Vagina (tissue), 2 donors: ENCODE measurements at regions of chr2 and their contacts with region 1.

Region 1: DNA sequence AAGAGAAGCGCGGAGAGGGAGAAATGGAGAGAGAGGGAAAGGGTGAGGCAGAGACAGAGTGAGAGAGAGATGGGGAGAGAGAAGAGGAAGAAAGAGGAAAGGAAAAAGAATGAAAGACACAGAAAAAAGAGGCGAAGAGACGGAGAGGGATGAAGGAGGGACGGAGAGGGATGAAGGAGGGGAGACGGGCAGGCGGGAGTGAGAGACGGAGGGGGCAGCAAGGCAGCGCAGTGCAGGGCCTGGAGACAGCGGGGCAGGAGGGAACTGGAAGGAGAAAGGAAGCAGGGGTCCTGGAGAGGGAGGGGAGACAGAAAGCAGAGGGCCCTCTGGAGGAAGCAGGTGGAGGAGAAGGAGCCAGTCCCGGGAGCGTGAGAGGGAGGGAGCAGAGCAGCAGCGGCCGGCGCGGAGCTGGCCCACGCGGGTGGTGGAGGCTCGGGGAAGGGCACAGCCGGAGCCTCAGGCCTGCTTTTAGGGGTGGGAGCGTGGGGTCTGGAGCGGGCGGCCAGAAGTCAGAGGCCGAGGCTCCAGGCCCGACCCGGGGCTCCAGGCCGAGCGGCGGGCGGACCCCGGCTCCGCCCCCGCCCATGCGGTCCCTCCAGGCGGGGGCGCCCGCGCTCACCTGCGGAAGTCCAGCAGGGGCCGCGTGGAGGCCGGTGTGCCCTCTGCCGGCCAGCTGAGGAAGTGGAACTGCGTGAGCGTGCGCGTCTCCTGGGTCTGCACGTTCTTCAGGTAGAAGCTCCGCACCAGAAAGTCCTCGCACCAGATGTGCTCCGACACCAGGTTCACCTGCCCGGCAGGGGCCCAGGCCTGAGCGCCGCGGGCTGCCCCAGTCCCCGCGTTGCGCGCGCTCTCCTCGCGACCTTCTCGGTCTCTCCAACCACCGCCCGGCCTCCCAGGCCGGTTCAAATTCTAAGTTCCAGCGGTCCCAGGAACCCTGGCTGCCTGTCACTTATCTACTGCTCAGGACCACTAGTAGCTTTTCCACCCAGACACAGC is 14.5 kb downstream of the PTPRN start:
- DNase-seq: peak in 1 of 2 donors; percentile 83
- H3K4me3 ChIP-seq: peak overlapping the region; percentile 44 to 54
- H3K27ac ChIP-seq: peak overlapping the region; percentile 89
- H3K4me1 ChIP-seq: peaks cover 6% of the 10 kb centered on the region
- H3K27me3 ChIP-seq: no peaks in the 10 kb centered on the region
- CTCF ChIP-seq: peak; percentile 99
- POLR2A ChIP-seq: no peak

Region 2: DNA sequence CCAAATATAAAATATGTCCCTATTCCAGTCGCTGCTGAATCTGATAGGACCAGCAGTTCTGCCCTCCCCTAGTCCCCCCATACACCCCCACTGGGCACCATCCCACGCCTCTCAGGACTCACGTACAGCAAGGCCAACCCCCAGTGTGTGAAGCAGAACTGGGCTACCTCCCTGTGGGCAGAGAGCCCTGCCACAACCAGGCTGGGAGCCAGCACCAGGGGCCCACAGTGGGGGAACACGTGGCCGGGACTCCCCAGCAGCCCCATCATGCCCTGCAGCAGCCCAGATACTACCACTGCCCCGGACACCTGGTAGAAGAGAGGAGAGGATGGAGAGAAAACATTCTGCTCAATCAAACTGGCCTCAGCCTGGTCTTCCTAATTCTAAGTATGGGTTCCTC is 126.1 kb before region 1 on chr2:
- intact Hi-C with region 1: loop called (anchors 5 kb)
- DNase-seq: peak in 1 of 2 donors; percentile 76
- H3K4me3 ChIP-seq: no peak overlapping the region
- H3K27ac ChIP-seq: no peak overlapping the region
- H3K4me1 ChIP-seq: no peaks in the 10 kb centered on the region
- H3K27me3 ChIP-seq: no peaks in the 10 kb centered on the region
- CTCF ChIP-seq: no peak
- POLR2A ChIP-seq: no peak

Region 3: DNA sequence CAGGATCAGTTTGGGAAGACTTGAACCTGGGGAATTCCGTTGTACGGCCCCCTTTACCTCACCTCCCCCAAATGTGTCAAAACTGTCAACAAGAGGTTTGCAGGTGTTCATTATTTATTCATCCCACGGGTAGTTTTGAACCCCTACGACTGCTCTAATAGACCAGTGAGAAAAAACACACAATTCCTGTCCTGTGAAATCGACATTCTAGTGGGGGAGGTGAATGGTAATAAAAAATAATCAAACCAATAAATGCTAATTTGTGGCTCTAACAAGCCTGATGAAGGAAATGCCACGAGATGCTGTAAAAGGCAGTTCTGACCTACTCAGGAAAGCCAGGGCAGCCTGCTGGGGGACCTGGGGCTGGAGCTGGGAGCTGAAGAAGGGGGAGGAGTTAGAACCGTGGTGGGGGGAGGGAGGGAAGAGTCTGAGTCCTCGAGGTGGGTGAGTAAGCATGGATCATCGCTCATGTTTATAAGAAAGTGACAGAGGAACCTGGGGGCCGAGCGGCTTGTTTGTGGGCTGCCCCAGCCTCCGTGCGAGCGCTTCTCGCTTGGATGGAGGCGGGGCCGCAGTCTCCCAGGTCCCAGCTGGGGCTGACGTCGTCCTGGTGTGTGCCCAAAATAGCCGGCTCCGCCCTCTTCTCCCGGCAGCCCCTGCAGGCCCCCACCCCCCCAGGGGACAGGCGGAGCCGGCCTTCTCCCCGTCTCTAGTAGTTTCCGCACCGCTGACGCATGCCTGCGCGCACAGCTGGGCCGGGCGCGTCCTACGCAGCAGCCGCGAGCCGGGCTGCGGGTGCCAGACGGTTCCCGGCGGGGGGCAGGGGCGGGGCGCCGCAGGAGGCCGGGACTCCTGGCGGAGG is 15.8 kb before region 1 on chr2 and contains the start of gene DNAJB2:
- intact Hi-C with region 1: loop called (anchors 1 kb)
- DNase-seq: peak in 1 of 2 donors; percentile 99
- H3K4me3 ChIP-seq: peak within 1 kb of the TSS; percentile 67 to 84
- H3K27ac ChIP-seq: peak within 1 kb of the TSS; percentile 100
- H3K4me1 ChIP-seq: peaks cover 39% of the 10 kb centered on the region
- H3K27me3 ChIP-seq: no peaks in the 10 kb centered on the region
- CTCF ChIP-seq: peak in 1 of 3 experiments; percentile 13
- POLR2A ChIP-seq: peak in 1 of 2 donors; percentile 83
- total RNA-seq, gene DNAJB2: 92.8 TPM

Region 4: DNA sequence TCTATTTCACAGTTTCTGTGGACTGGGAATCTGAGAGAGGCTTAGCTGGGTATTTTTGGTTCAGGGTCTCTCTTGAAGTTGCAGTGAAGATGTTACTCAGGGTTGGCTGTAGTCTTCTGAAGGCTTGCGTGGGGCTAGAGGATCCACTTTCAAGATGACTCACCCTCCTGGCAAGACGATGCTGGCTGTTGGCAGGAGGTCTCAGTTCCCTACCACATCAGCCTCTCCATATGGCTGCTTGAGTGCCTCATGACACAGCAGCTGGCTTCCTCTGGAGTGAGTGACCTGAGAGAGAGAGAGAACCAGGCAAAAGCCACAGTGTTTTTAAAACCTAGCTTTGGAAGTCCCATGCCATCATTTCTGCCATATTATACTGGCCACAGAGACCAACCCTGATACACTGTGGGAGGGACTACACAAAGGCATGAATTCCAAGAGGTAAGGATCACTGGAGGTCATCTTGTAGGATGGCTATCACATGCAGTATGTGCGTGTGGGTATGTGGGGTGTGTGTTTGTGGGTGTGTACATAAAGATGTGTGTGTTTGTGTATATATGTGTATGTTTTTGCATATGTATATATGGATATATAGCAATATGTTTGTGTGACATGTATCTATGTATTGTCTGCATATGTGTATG is 68.0 kb after region 1 on chr2:
- intact Hi-C with region 1: no loop called
- DNase-seq: no peak
- H3K4me3 ChIP-seq: no peak overlapping the region
- H3K27ac ChIP-seq: no peak overlapping the region
- H3K4me1 ChIP-seq: peaks cover 17% of the 10 kb centered on the region
- H3K27me3 ChIP-seq: no peaks in the 10 kb centered on the region
- CTCF ChIP-seq: no peak
- POLR2A ChIP-seq: no peak